Activated CD4-positive, alpha-beta T cell treated with anti-CD3 and anti-CD28 coated beads for 36 hours (primary cell): ENCODE measurements at regions of chr20 and their contacts with region 1.

Region 1: DNA sequence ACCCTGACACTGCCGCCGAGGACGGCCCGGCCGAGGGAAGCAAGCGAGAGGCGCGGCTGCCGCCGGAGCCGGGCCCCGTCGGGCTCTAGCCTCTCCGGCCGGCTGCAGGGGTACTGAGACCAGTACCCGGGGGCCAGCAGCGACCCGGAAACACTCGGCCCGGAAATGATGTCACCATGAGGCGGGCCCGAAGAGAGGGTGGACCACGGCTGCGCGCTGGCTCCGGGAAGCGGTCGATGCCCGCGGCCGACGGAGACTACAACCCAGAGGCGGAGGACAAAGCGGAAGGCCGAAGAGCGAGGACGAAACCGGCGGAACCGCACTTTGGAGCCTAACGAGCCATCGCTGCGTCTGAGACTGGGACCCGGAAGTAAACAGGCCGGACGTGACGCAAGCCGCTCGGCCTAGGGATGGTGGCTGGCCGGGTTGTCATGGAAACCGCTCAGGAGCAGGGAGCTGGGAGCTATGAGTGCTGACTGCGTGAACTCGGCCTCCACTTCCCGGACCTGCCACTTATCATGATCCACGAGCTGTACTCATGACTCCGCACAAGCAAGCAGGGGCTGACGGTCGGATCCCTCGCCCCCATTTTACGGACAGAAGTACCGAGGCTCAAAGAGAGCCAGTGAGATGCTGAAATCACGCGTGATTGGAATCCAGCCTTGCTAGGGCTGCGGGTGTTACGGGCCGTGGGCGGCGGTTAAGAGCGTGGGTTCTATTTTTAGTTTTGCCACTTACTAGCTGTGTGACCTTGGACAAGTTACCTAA is at the start of gene SPATA2:
- DNase-seq: peak; percentile 96
- ATAC-seq: peak; percentile 83
- H3K4me3 Mint-ChIP-seq: peak within 1 kb of the TSS; percentile 99
- H3K27ac Mint-ChIP-seq: peak within 1 kb of the TSS; percentile 100
- H3K4me1 Mint-ChIP-seq: peaks cover 27% of the 10 kb centered on the region
- H3K27me3 Mint-ChIP-seq: no peaks in the 10 kb centered on the region
- total RNA-seq, gene SPATA2: 8.7 to 10.1 TPM

Region 2: DNA sequence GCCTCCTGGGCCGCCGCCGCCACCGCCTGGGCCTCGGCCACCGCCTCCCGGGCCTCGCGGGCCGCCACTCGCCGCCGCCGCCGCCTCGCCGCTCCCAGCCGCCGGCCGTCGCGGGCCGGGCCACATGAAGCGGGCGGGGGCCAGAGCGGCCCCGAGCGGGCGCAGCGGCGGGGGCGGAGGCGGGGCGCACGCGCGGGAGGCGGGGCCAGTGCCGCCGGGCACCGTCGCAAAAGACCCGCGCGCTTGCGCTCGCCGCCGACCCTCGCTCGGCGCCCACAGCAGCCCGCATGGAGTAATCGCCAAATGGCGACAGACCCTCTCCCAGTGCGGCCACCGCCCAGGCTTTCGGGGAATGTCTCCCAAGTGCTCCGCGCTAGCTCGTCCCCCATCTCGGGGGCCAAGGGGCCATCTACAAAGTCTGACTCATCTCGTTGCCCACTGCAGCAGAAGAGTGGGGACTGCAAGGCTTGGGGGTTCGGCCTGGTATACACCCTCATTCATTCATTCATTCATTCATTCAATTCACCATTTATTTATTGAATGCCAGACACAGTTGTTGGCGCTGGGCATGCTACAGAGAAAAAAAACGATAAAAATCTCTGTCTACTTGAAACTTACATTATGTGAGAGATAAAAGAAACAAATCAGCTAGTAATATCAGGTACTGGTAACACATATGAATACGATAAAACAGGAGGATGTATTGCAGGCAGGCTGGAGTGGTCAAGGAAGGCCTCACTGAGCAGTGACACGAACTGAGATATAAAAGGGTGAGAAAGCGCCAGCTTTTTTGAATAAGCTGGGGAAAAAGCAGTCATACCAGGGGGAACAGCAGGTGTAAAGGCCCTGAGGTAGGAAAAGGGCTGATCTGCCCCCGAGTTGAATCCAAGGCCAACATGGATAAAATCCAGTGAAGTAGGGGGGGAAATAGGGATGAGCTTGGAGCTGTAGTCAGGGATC is 201.5 kb before region 1 on chr20 and contains the start of gene B4GALT5:
- CTCF ChIA-PET with region 1: no interaction called
- POLR2A ChIA-PET with region 1: interaction called, 4 read pairs
- intact Hi-C with region 1: loop called in 1 of 2 experiments (anchors 2 kb)
- DNase-seq: peak; percentile 77
- ATAC-seq: peak; percentile 73
- H3K4me3 Mint-ChIP-seq: peak within 1 kb of the TSS; percentile 82
- H3K27ac Mint-ChIP-seq: peak within 1 kb of the TSS; percentile 91
- H3K4me1 Mint-ChIP-seq: peaks cover 49% of the 10 kb centered on the region
- H3K27me3 Mint-ChIP-seq: peaks cover 5% of the 10 kb centered on the region
- total RNA-seq, gene B4GALT5: 18.6 to 19.6 TPM

Region 3: DNA sequence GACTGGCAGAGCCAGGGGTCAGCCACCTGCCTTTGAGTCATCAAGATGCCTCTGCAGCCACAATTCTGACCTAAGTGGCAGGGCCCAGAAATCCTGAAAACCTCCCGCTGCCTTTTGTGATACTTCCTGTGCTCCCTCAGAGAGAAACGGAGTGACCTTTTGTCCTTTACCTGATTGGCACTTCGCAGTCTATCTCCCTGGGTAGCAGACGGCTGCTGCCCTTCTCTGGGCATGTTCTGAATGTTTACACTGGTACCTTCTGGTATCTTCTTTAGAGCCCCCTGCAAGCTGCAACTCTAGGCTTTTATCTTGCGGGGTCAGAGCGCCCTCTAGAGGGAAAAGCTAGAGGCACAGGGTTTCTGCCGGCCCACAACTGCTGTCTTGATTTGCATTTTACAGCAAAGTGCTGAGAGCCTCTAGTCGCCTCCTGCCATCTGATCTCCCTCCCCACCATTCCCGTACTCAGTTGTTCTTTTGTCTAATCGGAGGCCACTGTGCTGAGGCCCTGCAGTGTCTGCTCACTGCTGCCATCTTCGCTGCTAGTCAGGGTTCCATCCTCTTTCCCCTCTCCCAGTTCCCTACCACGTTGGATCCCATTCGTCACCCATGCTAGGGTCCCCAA is 27.1 kb before region 1 on chr20:
- CTCF ChIA-PET with region 1: interaction called, 11 read pairs
- POLR2A ChIA-PET with region 1: no interaction called
- intact Hi-C with region 1: no loop called
- DNase-seq: peak; percentile 77
- ATAC-seq: peak; percentile 60
- H3K4me3 Mint-ChIP-seq: no peak overlapping the region
- H3K27ac Mint-ChIP-seq: peak overlapping the region; percentile 51
- H3K4me1 Mint-ChIP-seq: peaks cover 14% of the 10 kb centered on the region
- H3K27me3 Mint-ChIP-seq: no peaks in the 10 kb centered on the region

Region 4: DNA sequence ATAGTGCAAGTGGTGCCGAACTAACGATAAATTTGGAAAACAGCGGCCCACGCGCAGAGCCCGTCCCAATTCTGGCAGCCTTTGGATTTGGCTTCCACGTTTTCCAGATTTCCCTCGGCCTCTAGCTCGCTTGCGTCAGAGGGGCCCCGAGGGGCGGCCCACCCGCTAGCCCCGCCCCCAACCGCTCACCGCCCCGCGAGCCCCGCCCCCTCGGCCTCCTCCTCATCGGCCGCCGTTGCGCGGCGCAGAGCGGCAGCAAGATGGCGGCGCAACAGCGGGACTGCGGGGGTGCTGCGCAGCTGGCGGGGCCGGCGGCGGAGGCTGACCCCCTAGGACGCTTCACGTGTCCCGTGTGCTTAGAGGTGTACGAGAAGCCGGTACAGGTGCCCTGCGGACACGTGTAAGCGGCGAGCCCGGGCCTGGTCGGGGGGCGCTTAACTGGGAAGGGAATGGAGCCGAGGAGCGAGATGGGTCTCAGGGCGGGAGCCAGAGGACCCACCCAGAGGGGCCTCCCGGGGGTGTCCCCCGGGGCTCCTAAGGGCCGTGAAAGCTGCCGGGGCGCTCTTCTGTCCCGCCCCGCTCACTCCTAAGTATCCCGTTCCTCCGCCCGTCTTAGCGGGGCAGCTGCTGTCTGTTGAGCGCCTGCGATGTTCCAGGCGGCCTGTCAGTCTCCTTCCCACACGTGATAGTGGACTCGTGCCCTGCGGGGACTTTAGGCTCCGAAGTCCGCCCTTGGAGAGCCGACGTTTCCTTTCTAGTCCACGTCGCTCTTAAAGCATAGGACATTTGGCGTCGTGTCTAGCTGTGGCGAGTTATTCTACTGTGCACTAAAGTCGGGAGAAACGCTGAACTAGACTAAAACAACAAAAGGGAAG is 20.8 kb after region 1 on chr20 and contains the start of gene RNF114:
- CTCF ChIA-PET with region 1: interaction called, 7 read pairs
- POLR2A ChIA-PET with region 1: interaction called, 5 read pairs
- intact Hi-C with region 1: loop called in 1 of 2 experiments (anchors 1 kb)
- DNase-seq: peak; percentile 96
- ATAC-seq: peak; percentile 93
- H3K4me3 Mint-ChIP-seq: peak within 1 kb of the TSS; percentile 85
- H3K27ac Mint-ChIP-seq: peak within 1 kb of the TSS; percentile 85
- H3K4me1 Mint-ChIP-seq: peaks cover 41% of the 10 kb centered on the region
- H3K27me3 Mint-ChIP-seq: no peaks in the 10 kb centered on the region
- total RNA-seq, gene RNF114: 47.5 to 66.6 TPM

Region 5: GRCh38 chr20:50153485-50154377 is 238.2 kb after region 1 on chr20 and contains the start of gene PEDS1:
- CTCF ChIA-PET with region 1: no interaction called
- POLR2A ChIA-PET with region 1: no interaction called
- intact Hi-C with region 1: loop called in 1 of 2 experiments (anchors 1 kb)
- DNase-seq: peak; percentile 91
- ATAC-seq: peak; percentile 98
- H3K4me3 Mint-ChIP-seq: peak within 1 kb of the TSS; percentile 75
- H3K27ac Mint-ChIP-seq: peak within 1 kb of the TSS; percentile 88
- H3K4me1 Mint-ChIP-seq: peaks cover 36% of the 10 kb centered on the region
- H3K27me3 Mint-ChIP-seq: no peaks in the 10 kb centered on the region
- total RNA-seq, gene PEDS1: 13.2 to 16.8 TPM